Activated CD8-positive, alpha-beta memory T cell treated with anti-CD3 and anti-CD28 coated beads, Interleukin-2, amount 10 ng/mL, durations not matched to agents 7 days and 5 days (primary cell): ENCODE measurements at regions of chr7 and their contacts with region 1.

Region 1: DNA sequence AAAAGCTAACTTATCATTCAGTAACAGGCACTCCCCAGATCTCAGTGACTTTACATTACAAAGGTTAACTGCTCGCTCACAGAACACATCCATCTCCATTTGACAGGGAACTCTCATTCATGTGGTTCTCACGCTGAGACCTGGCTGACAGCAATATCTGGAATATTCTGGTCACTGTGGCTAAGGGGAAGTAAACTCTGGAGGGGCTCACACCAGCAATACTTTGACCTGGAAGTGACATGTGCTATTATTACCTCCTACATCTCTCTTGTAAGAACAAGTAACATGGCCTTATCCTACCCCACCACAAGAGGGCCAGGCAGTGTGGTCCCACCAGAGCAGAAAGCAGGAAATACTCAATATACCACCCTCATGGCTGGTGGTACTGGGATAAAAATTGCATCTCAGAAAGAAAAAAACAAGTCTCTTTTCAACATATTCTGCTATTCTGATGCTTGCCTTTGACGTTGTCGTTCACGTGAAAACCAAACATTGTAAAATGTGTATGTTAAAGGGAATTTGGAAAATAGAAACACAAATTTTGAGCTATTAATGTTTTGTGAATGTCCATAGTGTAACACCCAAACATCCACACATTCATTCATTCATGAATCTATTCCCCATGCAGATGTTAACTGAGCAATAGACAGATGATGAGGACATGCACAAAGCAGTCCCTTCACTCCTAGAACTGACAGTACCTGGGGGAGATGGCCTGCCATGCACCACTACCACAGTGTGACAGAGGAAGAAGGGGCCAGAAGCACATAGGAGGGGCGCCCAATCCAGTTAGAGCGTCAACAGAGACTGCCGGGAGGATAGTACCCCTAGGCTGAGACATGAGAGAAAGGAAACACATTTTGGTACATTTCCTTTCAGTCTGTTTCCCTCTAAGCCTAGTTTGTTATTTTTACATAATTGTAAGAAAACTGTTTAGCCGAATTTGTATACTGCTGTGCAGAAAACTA is 166.0 kb upstream of the SP4 start:
- DNase-seq: peak; percentile 84
- ATAC-seq: peak; percentile 99
- H3K4me3 Mint-ChIP-seq: no peak overlapping the region
- H3K27ac Mint-ChIP-seq: peak overlapping the region; percentile 74
- H3K4me1 Mint-ChIP-seq: peaks cover 16% of the 10 kb centered on the region
- H3K27me3 Mint-ChIP-seq: no peaks in the 10 kb centered on the region

Region 2: GRCh38 chr7:21076054-21076453 is 185.9 kb before region 1 on chr7:
- CTCF ChIA-PET with region 1: no interaction called
- DNase-seq: no peak
- ATAC-seq: no peak
- H3K4me3 Mint-ChIP-seq: no peak overlapping the region
- H3K27ac Mint-ChIP-seq: no peak overlapping the region
- H3K4me1 Mint-ChIP-seq: no peaks in the 10 kb centered on the region
- H3K27me3 Mint-ChIP-seq: no peaks in the 10 kb centered on the region

Region 3: GRCh38 chr7:21281183-21281582 is 19.3 kb after region 1 on chr7:
- CTCF ChIA-PET with region 1: interaction called, 14 read pairs
- DNase-seq: no peak
- ATAC-seq: no peak
- H3K4me3 Mint-ChIP-seq: no peak overlapping the region
- H3K27ac Mint-ChIP-seq: no peak overlapping the region
- H3K4me1 Mint-ChIP-seq: peaks cover 8% of the 10 kb centered on the region
- H3K27me3 Mint-ChIP-seq: no peaks in the 10 kb centered on the region

Region 4: GRCh38 chr7:21330462-21331178 is 68.7 kb after region 1 on chr7:
- CTCF ChIA-PET with region 1: no interaction called
- DNase-seq: no peak
- ATAC-seq: no peak
- H3K4me3 Mint-ChIP-seq: no peak overlapping the region
- H3K27ac Mint-ChIP-seq: no peak overlapping the region
- H3K4me1 Mint-ChIP-seq: peaks cover 16% of the 10 kb centered on the region
- H3K27me3 Mint-ChIP-seq: no peaks in the 10 kb centered on the region